SK-N-SH (cell line): ENCODE measurements at regions of chr11 and their contacts with region 1.

Region 1: DNA sequence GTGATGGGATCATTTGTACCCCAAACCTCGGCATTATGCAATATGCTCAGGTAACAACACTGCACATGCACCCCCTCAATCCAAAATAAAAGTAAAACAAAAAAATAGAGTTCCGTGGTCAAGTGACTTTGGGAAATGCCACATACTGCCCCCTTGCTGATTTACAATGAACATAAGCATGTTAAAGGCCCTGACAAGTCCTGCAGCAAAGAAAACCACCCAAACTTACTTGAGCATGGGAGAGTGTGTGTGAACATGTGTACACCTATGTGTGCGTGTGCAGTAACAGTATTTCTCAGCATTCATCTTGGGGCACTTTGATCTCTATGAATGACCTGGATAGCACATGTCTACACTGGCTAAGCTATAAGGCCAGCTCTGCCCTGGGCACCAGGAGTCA is 15.8 kb upstream of the IGSF22 start:
- DNase-seq: no peak
- H3K4me3 ChIP-seq: no peak overlapping the region
- H3K27ac ChIP-seq: no peak overlapping the region
- H3K4me1 ChIP-seq: no peaks in the 10 kb centered on the region; a peak in 1 of 4 replicates
- H3K27me3 ChIP-seq: no peaks in the 10 kb centered on the region
- CTCF ChIP-seq: no peak
- EP300 ChIP-seq: no peak
- RAD21 ChIP-seq: no peak

Region 2: GRCh38 chr11:18710545-18710944 is 31.2 kb before region 1 on chr11:
- CTCF ChIA-PET with region 1: no interaction called
- POLR2A ChIA-PET with region 1: no interaction called
- DNase-seq: no peak
- H3K4me3 ChIP-seq: no peak overlapping the region
- H3K27ac ChIP-seq: no peak overlapping the region
- H3K4me1 ChIP-seq: peaks cover 0 to 12% of the 10 kb centered on the region in 2 experiments; a peak in 2 of 4 replicates
- H3K27me3 ChIP-seq: peaks cover 9% of the 10 kb centered on the region; the same call in 1 of the 2 replicates
- CTCF ChIP-seq: no peak
- EP300 ChIP-seq: no peak
- RAD21 ChIP-seq: no peak

Region 3: DNA sequence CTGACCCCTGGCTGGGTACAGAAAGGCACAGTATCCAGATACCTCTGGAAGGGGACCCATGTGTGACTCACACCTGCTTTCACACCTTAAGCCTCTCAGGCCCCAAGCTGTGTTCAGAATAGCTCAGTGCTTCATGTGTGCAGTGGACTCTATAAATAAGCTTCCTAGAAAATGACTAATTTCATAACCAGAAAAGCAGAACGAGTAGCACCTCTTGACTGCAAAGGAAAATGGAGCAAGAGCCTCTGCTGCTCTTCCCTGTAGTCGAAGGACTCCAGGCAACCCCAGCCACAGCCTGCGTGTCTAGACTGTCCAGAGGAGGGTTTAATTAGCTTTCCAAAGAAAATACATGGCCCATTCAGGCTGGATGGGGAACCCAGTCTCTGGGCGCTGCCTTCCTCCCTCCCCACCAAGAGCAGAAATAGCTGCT is 26.7 kb after region 1 on chr11:
- CTCF ChIA-PET with region 1: interaction called, 16 read pairs
- POLR2A ChIA-PET with region 1: no interaction called
- DNase-seq: no peak
- H3K4me3 ChIP-seq: no peak overlapping the region
- H3K27ac ChIP-seq: no peak overlapping the region
- H3K4me1 ChIP-seq: 0 out of 4 replicates have a peak, but pooled peaks cover 0 to under 1% of the 10 kb centered on the region in 2 experiments
- H3K27me3 ChIP-seq: no peaks in the 10 kb centered on the region
- CTCF ChIP-seq: no peak
- EP300 ChIP-seq: no peak
- RAD21 ChIP-seq: no peak